Right ventricle myocardium inferior (tissue), 1 donor: ENCODE measurements at regions of chrX and their contacts with region 1.

Region 1: DNA sequence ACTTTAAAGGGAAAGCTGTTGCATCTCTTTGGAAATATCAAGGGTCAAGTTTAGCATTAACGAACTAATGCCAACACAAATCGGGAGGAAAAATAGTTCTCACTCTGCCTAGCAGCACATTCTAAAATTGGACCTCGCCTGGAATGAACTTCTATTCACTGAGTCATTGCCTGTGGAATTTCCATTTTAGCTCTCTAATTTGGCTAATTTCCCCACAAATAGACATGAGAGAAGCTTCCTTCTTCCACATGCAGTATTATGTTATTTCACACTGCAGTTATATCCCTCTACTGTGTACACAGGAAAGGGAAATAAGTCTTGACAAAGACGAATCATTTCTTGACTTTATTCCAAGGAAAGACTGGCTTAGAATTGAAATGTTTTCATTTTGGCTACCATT is 9.3 kb downstream of the ZXDA start:
- DNase-seq: no peak
- ATAC-seq: peak; percentile 46

Region 2: GRCh38 chrX:57595381-57595811 is 305.6 kb before region 1 on chrX:
- intact Hi-C with region 1: loop called (anchors 10 kb)
- DNase-seq: no peak
- ATAC-seq: no peak

Region 3: GRCh38 chrX:57821703-57822375 is 79.1 kb before region 1 on chrX:
- intact Hi-C with region 1: no loop called
- DNase-seq: no peak
- ATAC-seq: peak; percentile 48

Region 4: DNA sequence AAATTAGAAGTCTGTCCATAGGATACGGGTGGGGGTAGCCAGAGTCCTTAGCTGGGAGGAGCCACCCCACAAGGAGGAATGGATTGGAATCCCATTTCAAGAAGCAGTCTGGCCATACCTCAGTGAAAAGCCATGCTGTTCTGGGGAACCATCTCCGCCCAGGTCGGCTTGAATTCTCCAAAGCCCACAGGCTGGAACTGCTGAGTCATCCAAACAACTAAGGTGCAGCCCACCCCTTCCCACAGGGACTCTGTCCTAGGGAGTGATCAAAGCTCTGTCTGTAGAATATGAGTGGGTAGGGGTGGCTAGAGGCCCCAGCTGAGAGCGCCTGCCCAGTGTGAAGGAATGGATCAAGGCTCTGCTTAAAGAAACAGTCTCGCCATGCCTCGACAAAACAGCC is 29.5 kb before region 1 on chrX:
- intact Hi-C with region 1: no loop called
- DNase-seq: no peak
- ATAC-seq: no peak

Region 5: GRCh38 chrX:57977992-57978391 is 77.0 kb after region 1 on chrX:
- intact Hi-C with region 1: no loop called
- DNase-seq: no peak
- ATAC-seq: no peak